ENCODE measurements at regions of chr19 and their contacts with region 1.

Region 1: GRCh38 chr19:48372904-48373303 is 8.7 kb downstream of the SYNGR4 start:
- DNase-seq: peak; percentile 70
- H3K4me3 ChIP-seq: no peak overlapping the region
- H3K27ac ChIP-seq: no peak overlapping the region
- H3K4me1 ChIP-seq: peaks cover 3% of the 10 kb centered on the region
- H3K27me3 ChIP-seq: no peaks in the 10 kb centered on the region
- CTCF ChIP-seq: no peak

Region 2: DNA sequence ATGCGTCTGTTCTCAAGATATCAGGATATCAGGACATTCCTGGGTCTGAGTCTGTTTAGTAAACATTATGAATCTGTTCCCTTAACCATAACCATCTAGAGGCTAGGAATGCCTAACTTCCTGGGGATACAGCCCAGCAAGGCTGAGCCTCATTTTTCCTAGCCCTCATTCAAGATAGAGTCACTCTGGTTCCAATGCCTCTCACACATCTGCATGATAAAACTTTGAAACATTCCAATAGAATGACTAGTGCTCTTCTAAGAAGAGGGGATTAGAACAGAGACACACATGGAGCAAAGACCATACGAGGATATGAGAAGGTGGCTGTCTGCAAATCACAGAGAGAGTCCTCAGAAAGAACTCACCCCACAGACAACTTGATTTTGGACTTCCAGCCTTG is 308.4 kb before region 1 on chr19:
- intact Hi-C with region 1: loop called (anchors 10 kb)
- DNase-seq: no peak
- H3K4me3 ChIP-seq: no peak overlapping the region
- H3K27ac ChIP-seq: no peak overlapping the region
- H3K4me1 ChIP-seq: no peaks in the 10 kb centered on the region
- H3K27me3 ChIP-seq: no peaks in the 10 kb centered on the region
- CTCF ChIP-seq: no peak

Measured in colonic mucosa (tissue), 4 donors.